H1 (cell line): ENCODE measurements at regions of chr17 and their contacts with region 1.

Region 1: DNA sequence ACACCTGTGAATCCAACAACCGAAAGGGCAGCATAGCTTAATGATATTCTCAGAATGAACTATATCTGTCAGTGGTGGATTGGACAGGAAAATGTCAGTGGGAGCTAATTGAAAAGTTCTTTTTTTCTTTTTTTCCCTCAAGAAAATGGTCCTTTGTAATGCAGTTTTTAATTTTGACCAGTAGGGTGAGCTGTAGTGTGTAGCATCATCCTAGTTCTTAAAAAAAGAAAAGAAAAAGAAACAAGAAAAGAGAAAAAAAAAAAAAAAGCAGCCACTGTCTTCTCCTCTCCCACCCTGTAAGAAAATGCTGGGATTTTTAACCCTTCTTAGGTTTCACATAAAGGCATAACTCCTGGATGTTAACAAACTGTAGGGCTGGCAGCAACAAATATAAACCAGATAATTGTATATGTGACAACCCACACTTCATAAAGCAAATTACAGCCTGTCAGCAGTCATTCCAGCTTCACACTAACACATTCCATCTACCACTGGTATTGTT is 78.1 kb downstream of the SKAP1 start:
- DNase-seq: no peak
- H3K4me3 ChIP-seq: no peak overlapping the region
- H3K27ac ChIP-seq: no peak overlapping the region
- H3K4me1 ChIP-seq: no peaks in the 10 kb centered on the region
- H3K27me3 ChIP-seq: no peaks in the 10 kb centered on the region; a peak in 1 of 7 replicates
- CTCF ChIP-seq: peak in 2 of 3 experiments; percentile 33; a peak in 2 of 4 replicates
- EP300 ChIP-seq: no peak
- POLR2A ChIP-seq: no peak
- RAD21 ChIP-seq: peak in 1 of 2 experiments; percentile 51

Region 2: GRCh38 chr17:48228721-48229120 is 123.2 kb before region 1 on chr17:
- CTCF ChIA-PET with region 1: no interaction called
- POLR2A ChIA-PET with region 1: no interaction called
- DNase-seq: peak; percentile 9 to 60
- H3K4me3 ChIP-seq: no peak overlapping the region
- H3K27ac ChIP-seq: no peak overlapping the region
- H3K4me1 ChIP-seq: peaks cover 0 to 7% (median 3%) of the 10 kb centered on the region in 4 experiments; a peak in 3 of 7 replicates
- H3K27me3 ChIP-seq: peaks cover 0 to 2% (median 0%) of the 10 kb centered on the region in 4 experiments; a peak in 1 of 7 replicates
- CTCF ChIP-seq: peak; percentile 73 to 90 (median 75)
- EP300 ChIP-seq: no peak
- POLR2A ChIP-seq: no peak
- RAD21 ChIP-seq: peak; percentile 30 to 54; a peak in 3 of 4 replicates

Region 3: GRCh38 chr17:48335858-48336500 is 15.9 kb before region 1 on chr17:
- CTCF ChIA-PET with region 1: interaction called, 23 read pairs
- POLR2A ChIA-PET with region 1: no interaction called
- DNase-seq: no peak
- H3K4me3 ChIP-seq: no peak overlapping the region
- H3K27ac ChIP-seq: no peak overlapping the region
- H3K4me1 ChIP-seq: no peaks in the 10 kb centered on the region
- H3K27me3 ChIP-seq: peaks cover 0 to 2% (median 0%) of the 10 kb centered on the region in 4 experiments; a peak in 2 of 7 replicates
- CTCF ChIP-seq: peak in 2 of 3 experiments; percentile 37 to 50; a peak in 2 of 4 replicates
- EP300 ChIP-seq: no peak
- POLR2A ChIP-seq: no peak
- RAD21 ChIP-seq: peak; percentile 49 to 67

Region 4: DNA sequence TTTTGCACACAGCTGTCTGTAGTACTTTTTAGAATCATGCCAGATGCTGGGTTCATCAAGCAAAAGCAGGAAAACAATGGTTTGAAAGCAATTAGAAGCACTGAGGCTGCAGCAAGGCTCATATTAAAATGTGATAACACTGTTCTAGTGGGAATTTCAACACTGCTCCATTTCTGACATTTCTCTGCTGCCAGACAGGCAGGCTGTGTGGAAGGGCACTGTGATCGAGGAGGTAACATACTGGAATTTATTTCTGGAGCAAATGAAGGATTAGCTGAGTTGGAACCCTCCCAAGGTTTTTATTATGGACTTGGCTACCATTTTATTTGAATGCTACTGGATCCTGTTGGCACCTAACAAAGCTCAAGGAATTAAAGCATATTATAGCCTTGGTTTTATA is 11.3 kb after region 1 on chr17:
- CTCF ChIA-PET with region 1: interaction called, 25 read pairs
- POLR2A ChIA-PET with region 1: no interaction called
- DNase-seq: no peak
- H3K4me3 ChIP-seq: no peak overlapping the region
- H3K27ac ChIP-seq: no peak overlapping the region
- H3K4me1 ChIP-seq: no peaks in the 10 kb centered on the region
- H3K27me3 ChIP-seq: peaks cover 0 to 1% (median 0%) of the 10 kb centered on the region in 4 experiments; a peak in 3 of 7 replicates
- CTCF ChIP-seq: no peak
- EP300 ChIP-seq: no peak
- POLR2A ChIP-seq: no peak
- RAD21 ChIP-seq: no peak

Region 5: DNA sequence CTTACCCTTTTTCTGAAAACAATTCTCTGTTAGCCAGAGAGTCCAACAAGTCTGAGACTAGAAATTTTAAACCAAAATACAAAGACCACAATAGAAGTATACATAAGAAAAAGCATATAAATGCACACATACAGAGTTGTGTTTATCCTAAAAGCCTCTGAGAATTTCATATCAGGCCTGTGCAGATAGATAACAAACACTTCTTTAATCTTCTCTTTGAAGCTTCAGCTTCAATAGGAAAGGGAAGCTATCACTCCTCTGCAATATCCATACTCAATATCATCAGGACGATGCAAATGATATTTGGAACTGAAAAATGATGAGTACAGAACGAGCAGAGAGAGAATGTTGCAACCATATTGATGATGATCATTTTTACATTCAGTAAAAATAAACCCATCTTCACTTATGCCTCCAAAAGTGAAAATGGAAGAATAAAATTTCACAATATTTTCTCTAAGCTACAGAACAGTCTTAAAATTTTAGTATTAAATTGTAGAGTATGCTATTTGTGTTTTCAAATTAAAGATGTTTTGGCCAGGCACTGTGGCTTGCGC is 16.5 kb after region 1 on chr17:
- CTCF ChIA-PET with region 1: interaction called, 25 read pairs
- POLR2A ChIA-PET with region 1: interaction called, 3 read pairs
- DNase-seq: no peak
- H3K4me3 ChIP-seq: no peak overlapping the region
- H3K27ac ChIP-seq: no peak overlapping the region
- H3K4me1 ChIP-seq: no peaks in the 10 kb centered on the region
- H3K27me3 ChIP-seq: peaks cover 0 to 1% (median 0%) of the 10 kb centered on the region in 4 experiments; a peak in 2 of 7 replicates
- CTCF ChIP-seq: no peak
- EP300 ChIP-seq: no peak
- POLR2A ChIP-seq: no peak
- RAD21 ChIP-seq: no peak

Region 6: GRCh38 chr17:48427598-48427997 is 75.7 kb after region 1 on chr17:
- CTCF ChIA-PET with region 1: no interaction called
- POLR2A ChIA-PET with region 1: no interaction called
- DNase-seq: no peak
- H3K4me3 ChIP-seq: no peak overlapping the region
- H3K27ac ChIP-seq: no peak overlapping the region
- H3K4me1 ChIP-seq: peaks cover 0 to 3% (median 0%) of the 10 kb centered on the region in 4 experiments; a peak in 2 of 7 replicates
- H3K27me3 ChIP-seq: peaks cover 11 to 31% (median 27%) of the 10 kb centered on the region in 4 experiments
- CTCF ChIP-seq: no peak
- EP300 ChIP-seq: no peak
- POLR2A ChIP-seq: no peak
- RAD21 ChIP-seq: no peak

Region 7: DNA sequence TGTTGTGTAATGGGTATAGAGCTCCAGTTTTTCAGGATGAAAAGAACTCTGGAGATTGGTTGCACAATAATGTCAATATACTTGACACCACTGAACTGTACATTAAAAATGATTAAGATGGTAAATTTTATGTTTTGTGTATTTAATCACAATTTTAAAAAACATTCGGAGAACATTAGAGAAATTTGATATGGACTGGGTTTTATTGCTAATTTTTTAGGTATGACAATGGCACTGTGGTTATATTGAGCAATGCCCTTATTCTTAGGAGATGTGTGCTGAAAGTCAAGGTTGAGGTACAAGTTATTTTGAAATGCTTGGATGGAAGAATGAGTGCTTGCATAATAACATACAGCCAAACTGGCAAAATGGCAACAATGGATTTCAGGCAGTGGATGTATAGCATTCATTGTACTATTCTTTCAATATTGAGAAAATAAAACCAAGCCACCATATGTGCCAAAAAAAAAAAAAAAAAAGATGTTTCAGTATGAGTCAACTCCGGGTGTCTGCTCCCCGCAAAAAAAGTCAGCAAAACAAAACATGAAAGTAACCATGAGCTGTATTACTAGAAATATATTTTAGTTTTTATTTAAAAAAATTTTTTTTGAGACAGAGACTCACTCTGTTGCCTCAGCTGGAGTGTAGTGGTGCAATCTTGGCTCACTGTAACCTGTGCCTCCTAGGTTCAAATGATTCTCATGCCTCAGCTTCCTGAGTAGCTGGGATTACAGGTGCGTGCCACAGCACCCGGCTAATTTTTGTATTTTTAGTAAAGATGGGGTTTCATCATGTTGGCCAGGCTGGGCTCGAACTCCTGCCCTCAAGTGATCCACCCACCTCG is 159.1 kb after region 1 on chr17:
- CTCF ChIA-PET with region 1: no interaction called
- POLR2A ChIA-PET with region 1: no interaction called
- DNase-seq: no peak
- H3K4me3 ChIP-seq: no peak overlapping the region
- H3K27ac ChIP-seq: no peak overlapping the region
- H3K4me1 ChIP-seq: no peaks in the 10 kb centered on the region; a peak in 4 of 7 replicates
- H3K27me3 ChIP-seq: peaks cover 0 to 10% (median 0%) of the 10 kb centered on the region in 4 experiments; a peak in 4 of 7 replicates
- CTCF ChIP-seq: no peak
- EP300 ChIP-seq: no peak
- POLR2A ChIP-seq: no peak
- RAD21 ChIP-seq: no peak

Region 8: GRCh38 chr17:48601539-48602425 is 249.9 kb after region 1 on chr17:
- CTCF ChIA-PET with region 1: interaction called, 12 read pairs
- POLR2A ChIA-PET with region 1: no interaction called
- DNase-seq: no peak
- H3K4me3 ChIP-seq: no peak overlapping the region
- H3K27ac ChIP-seq: no peak overlapping the region
- H3K4me1 ChIP-seq: peaks cover 0 to 6% (median under 1%) of the 10 kb centered on the region in 4 experiments; a peak in 3 of 7 replicates
- H3K27me3 ChIP-seq: peaks cover 99 to 100% (median 100%) of the 10 kb centered on the region in 4 experiments
- CTCF ChIP-seq: no peak
- EP300 ChIP-seq: no peak
- POLR2A ChIP-seq: no peak
- RAD21 ChIP-seq: no peak